HepG2 (cell line): ENCODE measurements at regions of chr9 and their contacts with region 1.

Region 1: GRCh38 chr9:6907772-6908381 is 150.1 kb downstream of the KDM4C start:
- DNase-seq: peak; percentile 38
- ATAC-seq: peak; percentile 38; the same call in 1 of the 3 replicates
- H3K4me3 ChIP-seq: no peak overlapping the region
- H3K27ac ChIP-seq: peak overlapping the region; percentile 13
- H3K4me1 ChIP-seq: peaks cover 55% of the 10 kb centered on the region
- H3K27me3 ChIP-seq: no peaks in the 10 kb centered on the region
- CTCF ChIP-seq: peak; percentile 50
- EP300 ChIP-seq: no peak
- POLR2A ChIP-seq: no peak
- RAD21 ChIP-seq: no peak

Region 2: DNA sequence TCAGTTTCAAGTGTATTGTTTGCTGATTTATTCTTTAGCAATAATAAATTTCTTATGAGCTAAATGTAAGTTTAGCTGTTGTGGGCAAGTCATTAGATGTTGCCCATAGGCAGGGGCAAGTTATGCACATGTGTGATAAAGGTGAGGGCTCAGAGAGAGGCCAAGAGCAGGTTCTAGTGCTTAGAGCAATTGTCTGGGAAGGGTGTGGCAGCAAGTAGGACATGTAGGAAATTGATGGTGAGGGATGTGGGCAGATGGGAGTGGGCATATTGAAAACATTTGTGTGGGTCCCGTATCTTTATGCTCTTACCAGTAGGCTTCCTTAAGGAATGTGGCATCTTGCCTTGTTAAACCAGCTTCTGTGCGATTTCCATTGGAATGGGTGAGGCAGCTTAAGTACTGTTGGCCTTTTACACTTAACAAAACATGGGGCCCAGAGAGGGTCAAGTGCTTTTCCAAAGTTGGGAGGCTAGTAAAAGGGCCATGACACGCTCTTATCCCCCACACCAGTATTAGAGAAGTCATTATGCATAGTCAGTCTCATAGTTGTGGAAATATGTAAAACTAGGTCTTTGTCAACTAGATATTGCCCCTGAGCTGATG is 89.5 kb before region 1 on chr9:
- CTCF ChIA-PET with region 1: no interaction called
- POLR2A ChIA-PET with region 1: no interaction called
- in situ Hi-C with region 1: no loop called
- intact Hi-C with region 1: no loop called
- DNase-seq: no peak
- ATAC-seq: no peak
- H3K4me3 ChIP-seq: no peak overlapping the region
- H3K27ac ChIP-seq: no peak overlapping the region
- H3K4me1 ChIP-seq: peaks cover 22% of the 10 kb centered on the region
- H3K27me3 ChIP-seq: no peaks in the 10 kb centered on the region
- CTCF ChIP-seq: no peak
- EP300 ChIP-seq: no peak
- POLR2A ChIP-seq: no peak
- RAD21 ChIP-seq: no peak

Region 3: GRCh38 chr9:6924988-6925563 is 17.2 kb after region 1 on chr9:
- CTCF ChIA-PET with region 1: no interaction called
- POLR2A ChIA-PET with region 1: no interaction called
- in situ Hi-C with region 1: no loop called
- intact Hi-C with region 1: no loop called
- DNase-seq: peak; percentile 45
- ATAC-seq: peak; percentile 54; the same call in 2 of the 3 replicates
- H3K4me3 ChIP-seq: no peak overlapping the region
- H3K27ac ChIP-seq: no peak overlapping the region
- H3K4me1 ChIP-seq: peaks cover 29% of the 10 kb centered on the region
- H3K27me3 ChIP-seq: no peaks in the 10 kb centered on the region
- CTCF ChIP-seq: no peak
- EP300 ChIP-seq: no peak
- POLR2A ChIP-seq: no peak
- RAD21 ChIP-seq: no peak

Region 4: GRCh38 chr9:6973762-6974161 is 65.9 kb after region 1 on chr9:
- CTCF ChIA-PET with region 1: no interaction called
- POLR2A ChIA-PET with region 1: no interaction called
- in situ Hi-C with region 1: loop called (anchors 5 kb)
- intact Hi-C with region 1: loop called (anchors 10 kb)
- DNase-seq: peak; percentile 58
- ATAC-seq: peak; percentile 71
- H3K4me3 ChIP-seq: no peak overlapping the region
- H3K27ac ChIP-seq: no peak overlapping the region
- H3K4me1 ChIP-seq: peaks cover 47% of the 10 kb centered on the region
- H3K27me3 ChIP-seq: no peaks in the 10 kb centered on the region
- CTCF ChIP-seq: no peak
- EP300 ChIP-seq: no peak
- POLR2A ChIP-seq: no peak
- RAD21 ChIP-seq: no peak

Region 5: DNA sequence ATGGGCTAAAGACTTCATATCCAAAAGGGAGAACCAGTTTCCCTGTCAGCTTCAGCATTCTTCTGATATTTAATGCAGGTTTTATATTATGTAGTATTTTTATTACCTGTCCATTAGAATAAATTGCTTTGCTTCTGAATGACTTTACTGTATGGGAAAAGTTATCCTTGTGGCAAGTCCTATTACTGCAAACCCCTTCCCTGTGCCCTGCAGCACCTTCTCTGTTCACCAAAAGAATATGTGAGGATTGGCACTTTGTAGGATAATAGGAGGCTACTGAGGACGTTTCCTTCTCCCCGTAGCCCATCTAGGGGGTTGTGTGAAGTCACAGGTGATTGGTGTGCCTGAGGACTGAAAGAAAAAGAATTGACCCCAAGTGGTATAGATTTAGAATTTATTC is 146.0 kb after region 1 on chr9:
- CTCF ChIA-PET with region 1: no interaction called
- POLR2A ChIA-PET with region 1: no interaction called
- in situ Hi-C with region 1: no loop called
- intact Hi-C with region 1: loop called (anchors 5 kb)
- DNase-seq: no peak
- ATAC-seq: no peak
- H3K4me3 ChIP-seq: no peak overlapping the region
- H3K27ac ChIP-seq: no peak overlapping the region
- H3K4me1 ChIP-seq: no peaks in the 10 kb centered on the region
- H3K27me3 ChIP-seq: no peaks in the 10 kb centered on the region
- CTCF ChIP-seq: no peak
- EP300 ChIP-seq: no peak
- POLR2A ChIP-seq: no peak
- RAD21 ChIP-seq: no peak

Region 6: GRCh38 chr9:7186175-7186574 is 278.3 kb after region 1 on chr9:
- CTCF ChIA-PET with region 1: interaction called, 3 read pairs
- POLR2A ChIA-PET with region 1: no interaction called
- in situ Hi-C with region 1: loop called (anchors 25 kb)
- intact Hi-C with region 1: no loop called
- DNase-seq: peak; percentile 16
- ATAC-seq: peak; percentile 60
- H3K4me3 ChIP-seq: no peak overlapping the region
- H3K27ac ChIP-seq: no peak overlapping the region
- H3K4me1 ChIP-seq: no peaks in the 10 kb centered on the region
- H3K27me3 ChIP-seq: no peaks in the 10 kb centered on the region
- CTCF ChIP-seq: peak; percentile 81
- EP300 ChIP-seq: no peak
- POLR2A ChIP-seq: no peak
- RAD21 ChIP-seq: no peak

Region 7: DNA sequence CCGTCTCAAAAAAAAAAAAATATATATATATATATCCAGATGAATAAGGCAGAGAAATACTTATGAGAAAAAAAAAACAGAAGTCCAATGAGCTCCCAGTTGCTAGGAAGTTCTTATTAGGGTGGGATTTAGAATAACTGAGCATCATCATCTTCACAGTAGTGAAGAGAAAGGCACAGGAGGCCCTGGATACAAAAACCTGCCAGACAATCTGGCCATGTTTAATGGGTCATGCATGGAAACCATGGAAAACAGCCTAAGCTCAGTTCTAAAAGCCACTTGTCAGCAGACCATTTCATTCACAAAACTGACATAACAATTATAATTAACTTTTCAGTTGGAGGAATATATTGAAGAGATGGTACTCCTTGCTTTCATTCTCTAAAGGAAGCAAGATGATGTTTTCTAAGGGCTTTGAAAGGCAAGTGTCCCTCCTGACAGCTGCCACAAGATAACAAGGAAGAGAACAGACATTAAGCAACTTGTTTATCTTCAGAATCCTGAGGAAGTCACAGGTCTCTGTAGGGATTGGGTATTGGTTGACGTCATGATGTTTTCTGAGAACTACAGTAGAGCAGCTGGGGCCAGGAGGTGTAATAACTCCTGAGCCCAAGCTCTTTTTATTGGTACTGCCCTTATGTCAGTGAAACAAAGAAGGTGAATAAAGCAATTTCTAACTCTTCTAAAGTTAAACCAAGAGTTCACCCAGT is 428.6 kb after region 1 on chr9:
- CTCF ChIA-PET with region 1: no interaction called
- POLR2A ChIA-PET with region 1: no interaction called
- in situ Hi-C with region 1: no loop called
- intact Hi-C with region 1: no loop called
- DNase-seq: no peak
- ATAC-seq: no peak
- H3K4me3 ChIP-seq: no peak overlapping the region
- H3K27ac ChIP-seq: no peak overlapping the region
- H3K4me1 ChIP-seq: no peaks in the 10 kb centered on the region
- H3K27me3 ChIP-seq: no peaks in the 10 kb centered on the region
- CTCF ChIP-seq: no peak
- EP300 ChIP-seq: no peak
- POLR2A ChIP-seq: no peak
- RAD21 ChIP-seq: no peak